ENCODE measurements at regions of chr1 and their contacts with region 1.

Region 1: GRCh38 chr1:200971955-200972711 is 51.4 kb downstream of the KIF21B start:
- DNase-seq: peak; percentile 85
- H3K27ac ChIP-seq: 0 out of 2 replicates have a peak overlapping the region, but pooled peaks have one; percentile 15
- CTCF ChIP-seq: peak; percentile 79

Region 2: DNA sequence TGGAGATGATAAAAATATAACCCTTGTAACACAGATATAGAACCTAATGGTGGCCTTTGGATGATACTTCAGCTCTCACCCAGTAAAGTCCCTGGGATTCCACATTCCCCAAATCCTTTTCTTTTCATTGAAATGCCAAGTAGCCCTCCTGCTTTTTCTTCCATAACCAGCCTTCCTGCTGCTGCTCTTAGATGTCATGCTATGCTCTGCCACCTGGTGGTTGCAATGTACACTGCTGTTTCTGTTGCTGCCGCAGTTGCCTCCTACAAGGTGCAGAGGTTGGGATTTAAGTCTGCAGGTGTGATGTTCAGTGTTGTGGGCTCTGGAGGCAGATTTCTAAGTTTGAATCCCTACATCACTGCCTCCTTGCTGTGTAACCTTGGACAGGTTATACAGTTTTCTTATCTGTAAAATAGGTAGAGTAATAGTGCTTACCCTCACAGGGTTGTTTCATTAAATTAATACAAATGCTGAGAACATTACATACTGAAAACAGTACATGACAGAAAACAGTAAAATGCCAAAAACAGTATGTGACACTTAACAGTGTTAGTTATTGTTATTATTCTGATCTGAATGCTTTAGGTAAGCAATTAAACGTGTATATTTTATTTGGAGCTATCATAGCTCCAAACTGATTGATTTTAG is 169.1 kb before region 1 on chr1:
- CTCF ChIA-PET with region 1: no interaction called
- POLR2A ChIA-PET with region 1: no interaction called
- DNase-seq: peak; percentile 89
- H3K27ac ChIP-seq: no peak overlapping the region
- CTCF ChIP-seq: peak; percentile 92

Region 3: GRCh38 chr1:200951016-200951415 is 21.1 kb before region 1 on chr1:
- CTCF ChIA-PET with region 1: interaction called, 10 read pairs
- POLR2A ChIA-PET with region 1: no interaction called
- DNase-seq: no peak
- H3K27ac ChIP-seq: no peak overlapping the region
- CTCF ChIP-seq: no peak

Region 4: DNA sequence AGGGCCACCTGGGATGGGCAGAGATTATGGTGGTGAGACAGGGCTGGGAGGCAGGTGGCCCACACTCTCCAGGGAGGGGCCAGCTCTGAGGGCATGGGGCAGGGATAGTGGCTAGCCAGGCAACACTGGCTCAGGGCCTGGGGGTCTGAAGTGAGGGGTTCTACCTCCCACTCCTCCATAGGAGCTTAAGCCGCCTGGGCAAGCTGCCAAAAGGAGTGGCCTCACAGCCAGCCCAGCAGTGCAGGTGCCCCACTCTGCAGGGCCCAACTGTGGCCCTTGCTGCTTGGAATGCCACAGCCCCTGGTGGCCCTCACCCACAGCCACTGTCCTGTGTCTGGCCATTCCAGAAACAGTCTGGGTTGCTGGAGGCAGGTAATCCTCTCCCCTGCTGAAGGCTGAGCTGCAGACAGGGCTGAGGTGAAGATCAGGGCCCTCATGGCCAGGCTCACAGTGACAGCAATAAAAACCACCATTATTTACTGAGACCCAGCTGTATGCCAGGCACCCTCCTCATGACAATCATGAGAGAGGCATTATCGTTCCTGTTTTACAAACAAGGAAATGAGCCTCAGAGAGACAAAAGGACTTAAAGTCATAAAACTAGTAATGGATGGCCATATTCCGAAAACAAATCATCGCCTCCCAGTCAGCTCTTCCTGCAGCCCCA is 20.4 kb after region 1 on chr1:
- CTCF ChIA-PET with region 1: interaction called, 21 read pairs
- POLR2A ChIA-PET with region 1: no interaction called
- DNase-seq: no peak
- H3K27ac ChIP-seq: no peak overlapping the region
- CTCF ChIP-seq: no peak

Region 5: DNA sequence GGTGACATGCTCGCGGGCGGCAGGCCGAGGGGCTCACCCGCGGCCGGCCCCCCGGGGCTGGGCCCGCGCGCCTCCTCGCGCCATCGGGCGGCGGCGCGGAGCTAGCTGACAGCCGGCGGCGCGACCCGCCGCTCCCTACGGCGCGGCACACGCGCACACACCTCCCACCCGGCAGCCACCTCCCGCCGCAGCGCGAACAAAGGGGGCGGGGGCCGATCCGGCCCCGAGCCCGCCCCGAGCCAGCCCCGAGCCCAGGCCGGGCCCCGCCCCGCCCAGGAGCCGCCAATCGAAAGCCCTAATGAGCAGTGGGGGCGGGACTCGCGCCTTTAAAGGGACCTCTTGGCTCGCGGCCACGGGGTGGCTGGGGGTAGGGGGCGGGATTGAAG is 51.4 kb after region 1 on chr1 and contains the start of gene KIF21B:
- CTCF ChIA-PET with region 1: interaction called, 27 read pairs
- POLR2A ChIA-PET with region 1: no interaction called
- DNase-seq: peak; percentile 93
- H3K27ac ChIP-seq: no peak within 1 kb of the TSS
- CTCF ChIP-seq: no peak

Region 6: DNA sequence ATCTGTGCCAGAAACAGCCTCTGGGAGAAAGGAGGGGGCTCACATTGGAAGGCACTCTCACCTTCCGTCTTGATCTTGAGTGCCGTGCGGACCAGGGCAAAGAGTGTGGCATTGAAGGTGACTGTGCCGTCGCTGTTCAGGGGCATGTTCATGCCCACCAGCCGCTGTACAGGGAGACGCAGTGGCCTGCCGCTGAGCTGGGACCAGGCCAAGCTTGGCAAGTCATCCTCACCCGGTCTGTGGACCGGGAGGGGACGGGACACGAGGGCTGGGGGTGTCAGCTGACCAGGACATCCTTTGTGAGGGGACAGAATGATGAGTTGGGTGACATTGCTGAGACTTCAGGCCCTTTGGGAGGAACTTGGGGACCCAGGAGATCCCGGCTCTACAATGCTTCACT is 76.4 kb after region 1 on chr1:
- CTCF ChIA-PET with region 1: interaction called, 13 read pairs
- POLR2A ChIA-PET with region 1: no interaction called
- DNase-seq: no peak
- H3K27ac ChIP-seq: no peak overlapping the region
- CTCF ChIP-seq: no peak

Region 7: DNA sequence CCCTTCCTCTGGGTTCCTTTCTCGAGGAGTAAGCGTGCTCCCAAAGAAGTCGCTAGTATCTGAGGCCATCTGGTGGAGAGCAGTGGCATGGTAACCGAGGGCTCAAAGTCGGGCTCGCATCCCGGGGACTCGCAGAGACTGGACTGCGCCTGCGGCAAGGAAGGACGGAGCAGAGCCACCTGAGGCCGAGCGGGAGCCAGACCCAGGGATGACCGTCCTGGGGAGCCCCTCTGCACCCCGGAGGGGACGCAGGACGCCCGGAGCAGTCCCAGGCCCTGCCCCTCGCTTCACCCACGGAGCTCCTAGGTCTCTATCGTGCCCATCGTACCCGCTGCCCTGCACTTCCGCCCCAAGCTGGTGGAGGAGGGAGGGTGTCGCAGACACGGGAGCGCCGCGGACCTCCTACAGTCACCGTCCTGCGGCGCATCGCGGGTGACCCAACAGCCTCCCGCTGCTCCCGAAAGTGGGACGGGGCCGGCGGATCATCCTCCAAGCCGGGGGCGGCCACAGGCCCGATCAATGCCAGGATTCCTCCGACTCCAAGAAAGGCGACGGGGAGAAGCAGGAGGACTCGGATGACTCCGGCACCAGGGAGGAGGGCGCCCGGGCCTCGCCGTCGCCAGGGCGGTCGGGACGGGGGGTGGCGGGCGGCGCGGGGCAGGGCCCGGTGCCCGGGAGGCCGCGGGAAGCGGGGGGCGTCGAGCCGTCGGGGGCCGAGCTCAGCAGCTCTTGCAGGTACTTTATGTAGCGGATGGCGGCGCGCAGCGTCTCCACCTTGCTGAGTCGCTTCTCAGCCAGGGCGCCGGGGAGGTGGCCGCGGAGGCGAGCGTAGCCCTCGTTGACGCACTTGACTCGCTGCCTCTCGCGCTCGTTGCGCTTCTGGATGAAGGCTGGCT is 142.4 kb after region 1 on chr1:
- CTCF ChIA-PET with region 1: interaction called, 47 read pairs
- POLR2A ChIA-PET with region 1: interaction called, 8 read pairs
- DNase-seq: peak; percentile 99
- H3K27ac ChIP-seq: peak overlapping the region; percentile 57
- CTCF ChIP-seq: peak; percentile 83

Region 8: GRCh38 chr1:201154389-201155165 is 182.4 kb after region 1 on chr1 and contains the start of gene TMEM9:
- CTCF ChIA-PET with region 1: interaction called, 10 read pairs
- POLR2A ChIA-PET with region 1: no interaction called
- DNase-seq: peak; percentile 100
- H3K27ac ChIP-seq: peak within 1 kb of the TSS; percentile 69
- CTCF ChIP-seq: no peak

Region 9: DNA sequence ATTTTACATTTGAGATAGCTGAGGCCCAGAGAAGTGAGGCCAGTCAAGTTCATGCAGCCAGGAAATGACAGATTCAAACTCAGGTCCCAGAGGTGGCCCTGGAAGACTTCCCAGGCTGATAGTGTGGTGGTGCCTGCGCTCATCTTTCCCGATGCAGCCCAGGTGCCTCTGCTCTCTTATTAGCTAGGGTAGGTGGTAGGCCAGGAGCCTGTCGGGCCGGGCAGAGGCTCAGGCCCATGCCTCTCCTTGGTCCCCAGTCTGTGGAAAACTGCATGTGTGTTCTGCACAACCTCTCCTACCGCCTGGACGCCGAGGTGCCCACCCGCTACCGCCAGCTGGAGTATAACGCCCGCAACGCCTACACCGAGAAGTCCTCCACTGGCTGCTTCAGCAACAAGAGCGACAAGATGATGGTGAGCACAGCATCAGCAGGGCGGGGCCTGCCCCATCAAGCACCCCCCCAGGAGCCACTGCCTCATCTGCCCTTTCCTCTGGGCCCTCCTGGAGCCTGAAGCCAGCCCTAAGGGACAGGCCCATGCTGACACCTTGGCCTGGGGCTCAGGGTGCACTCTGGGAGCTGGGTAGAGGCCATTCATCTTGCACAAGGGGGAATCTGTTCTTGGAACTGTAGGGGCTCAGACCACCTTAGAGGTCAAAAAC is 349.7 kb after region 1 on chr1:
- CTCF ChIA-PET with region 1: no interaction called
- POLR2A ChIA-PET with region 1: no interaction called
- DNase-seq: no peak
- H3K27ac ChIP-seq: peak overlapping the region; percentile 90
- CTCF ChIP-seq: no peak

Region 10: DNA sequence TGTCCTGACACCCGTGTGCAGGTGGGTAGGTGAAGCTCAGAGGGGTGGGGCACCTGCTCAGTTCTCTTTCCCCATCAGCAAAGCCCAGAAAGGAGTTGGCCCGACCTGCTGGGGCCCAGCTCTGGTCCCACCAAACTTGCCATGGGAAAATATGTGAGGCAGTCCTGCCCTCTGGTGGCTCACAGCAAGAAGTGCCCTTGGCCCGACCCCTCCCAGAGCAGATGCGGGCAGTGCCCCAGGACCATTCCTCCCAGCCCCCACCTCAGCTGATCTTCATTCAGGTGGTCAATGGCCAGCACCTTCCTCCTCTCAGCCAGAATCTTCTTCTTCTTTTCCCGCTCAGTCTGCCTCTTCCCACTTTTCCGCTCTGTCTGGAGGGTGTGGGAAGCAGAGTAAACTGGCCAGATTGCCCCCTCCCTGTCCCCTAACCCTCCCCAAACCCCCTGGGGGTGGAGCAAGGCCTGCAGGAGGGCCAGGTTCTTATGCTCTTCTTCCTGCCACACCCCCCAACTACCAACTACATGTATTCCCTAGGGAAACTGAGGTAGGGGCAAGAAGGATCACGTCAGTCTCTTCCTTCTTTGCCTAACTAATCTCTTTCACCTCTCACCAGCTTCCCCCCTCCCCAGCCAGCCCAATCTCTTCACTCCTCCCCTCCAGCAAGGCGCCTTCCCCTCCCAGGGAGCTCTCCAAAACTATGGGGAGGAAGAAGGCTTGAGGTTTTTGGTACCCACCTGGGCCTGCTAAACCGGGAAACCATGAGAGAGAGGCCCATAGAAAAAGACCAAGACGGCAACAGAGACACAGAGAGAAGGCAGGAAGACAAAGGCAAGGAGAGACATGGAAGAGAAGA is 389.7 kb after region 1 on chr1:
- CTCF ChIA-PET with region 1: no interaction called
- POLR2A ChIA-PET with region 1: no interaction called
- DNase-seq: peak; percentile 95
- H3K27ac ChIP-seq: no peak overlapping the region
- CTCF ChIP-seq: peak; percentile 83

Measured in RWPE1 (cell line).